Activated B cell treated with CpG ODN at 0.5 μM for 24 hours (primary cell): ENCODE measurements at regions of chr6 and their contacts with region 1.

Region 1: DNA sequence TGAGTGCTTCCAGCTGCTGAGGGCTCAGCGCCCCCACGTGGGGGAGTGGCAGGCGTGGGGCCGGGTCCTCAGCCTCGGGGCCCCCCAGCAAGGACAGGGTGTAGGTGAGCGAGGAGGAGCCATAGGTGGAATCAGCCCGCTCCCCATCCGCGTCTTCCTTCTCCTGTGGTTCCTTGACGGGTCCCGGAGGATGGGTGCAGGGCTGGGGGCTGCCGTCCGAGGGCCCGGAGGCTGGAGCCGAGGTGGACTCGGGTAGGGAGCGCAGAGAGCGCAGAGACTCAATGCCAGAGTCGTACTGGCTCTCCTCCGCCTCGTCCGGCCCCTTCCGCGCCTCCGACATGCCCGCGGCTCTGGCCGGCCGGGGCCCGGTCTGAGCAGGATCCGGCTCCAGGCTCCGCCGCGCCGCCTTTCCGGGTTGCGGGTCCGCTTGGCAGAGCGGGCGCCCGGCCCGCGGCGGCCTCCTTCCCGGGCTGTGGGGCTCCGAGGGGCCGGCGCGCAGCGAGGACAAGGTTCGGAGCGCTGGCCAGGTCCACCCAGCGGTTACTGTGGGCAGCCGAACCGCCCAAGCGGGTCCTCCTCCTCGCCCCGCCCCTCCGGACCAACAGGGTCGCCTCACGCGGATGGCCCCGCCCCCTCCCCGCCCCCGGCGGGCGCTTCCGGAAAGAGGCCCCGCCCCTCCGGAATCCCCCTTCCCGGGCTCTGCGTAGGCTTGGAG is at the start of gene NFKBIE:
- DNase-seq: peak; percentile 99
- ATAC-seq: peak; percentile 50
- H3K4me3 Mint-ChIP-seq: peak within 1 kb of the TSS; percentile 100
- H3K27ac Mint-ChIP-seq: peak within 1 kb of the TSS; percentile 99
- H3K4me1 Mint-ChIP-seq: peaks cover 77% of the 10 kb centered on the region
- H3K27me3 Mint-ChIP-seq: peaks cover 4% of the 10 kb centered on the region
- CTCF ChIP-seq: no peak
- total RNA-seq, gene NFKBIE: 94.7 and 99.2 TPM in 2 replicates

Region 2: GRCh38 chr6:42563697-42564505 is 1701.3 kb before region 1 on chr6 and contains the start of gene UBR2:
- CTCF ChIA-PET with region 1: no interaction called
- POLR2A ChIA-PET with region 1: no interaction called
- intact Hi-C with region 1: loop called (anchors 10 kb)
- DNase-seq: peak; percentile 73
- ATAC-seq: peak; percentile 96
- H3K4me3 Mint-ChIP-seq: peak within 1 kb of the TSS; percentile 92
- H3K27ac Mint-ChIP-seq: peak within 1 kb of the TSS; percentile 92
- H3K4me1 Mint-ChIP-seq: peaks cover 43% of the 10 kb centered on the region
- H3K27me3 Mint-ChIP-seq: no peaks in the 10 kb centered on the region
- CTCF ChIP-seq: no peak
- total RNA-seq, gene UBR2: 34.3 and 40.8 TPM in 2 replicates

Region 3: DNA sequence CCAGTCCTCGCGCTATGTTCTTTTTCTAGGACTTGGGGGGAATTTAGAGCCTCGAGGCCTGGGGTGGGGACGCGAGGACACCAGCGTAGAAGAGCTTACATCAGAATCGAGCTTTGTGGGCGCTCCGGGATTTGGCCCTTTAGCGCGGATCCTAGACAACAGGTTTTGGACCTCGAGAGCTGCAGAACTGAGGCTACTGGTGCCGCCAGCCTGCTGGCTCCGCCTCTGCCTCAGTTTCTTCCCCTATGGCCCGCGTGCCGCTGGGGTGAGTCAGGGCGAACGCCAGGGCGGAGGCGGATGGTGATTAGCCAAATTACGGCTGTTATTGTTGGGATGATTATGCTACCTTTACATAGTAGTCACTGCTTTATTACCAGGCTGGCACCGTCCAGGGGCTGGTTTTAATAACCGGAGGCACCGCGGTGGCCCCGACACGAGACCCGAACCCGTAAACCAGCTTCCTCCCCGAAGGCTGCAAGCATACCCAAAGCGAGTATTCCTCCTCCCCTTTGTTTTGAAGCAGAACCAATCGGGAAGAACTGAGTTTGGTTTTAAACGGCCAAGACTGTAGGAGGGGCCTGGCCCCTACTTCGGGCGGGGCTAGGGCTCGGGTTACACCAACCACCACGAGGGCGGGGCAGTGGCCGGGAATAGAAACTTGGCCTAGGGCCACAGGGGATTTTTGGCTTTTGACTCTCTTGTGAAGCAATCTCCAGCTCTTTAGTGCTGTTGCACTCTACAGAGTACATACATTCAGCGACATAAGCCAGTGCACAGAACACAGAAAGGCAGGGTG is 635.5 kb before region 1 on chr6:
- CTCF ChIA-PET with region 1: no interaction called
- POLR2A ChIA-PET with region 1: interaction called, 5 read pairs
- intact Hi-C with region 1: loop called (anchors 5 kb)
- DNase-seq: peak; percentile 87
- ATAC-seq: peak; percentile 70
- H3K4me3 Mint-ChIP-seq: peak overlapping the region; percentile 98
- H3K27ac Mint-ChIP-seq: peak overlapping the region; percentile 99
- H3K4me1 Mint-ChIP-seq: peaks cover 41% of the 10 kb centered on the region
- H3K27me3 Mint-ChIP-seq: no peaks in the 10 kb centered on the region
- CTCF ChIP-seq: no peak

Region 4: DNA sequence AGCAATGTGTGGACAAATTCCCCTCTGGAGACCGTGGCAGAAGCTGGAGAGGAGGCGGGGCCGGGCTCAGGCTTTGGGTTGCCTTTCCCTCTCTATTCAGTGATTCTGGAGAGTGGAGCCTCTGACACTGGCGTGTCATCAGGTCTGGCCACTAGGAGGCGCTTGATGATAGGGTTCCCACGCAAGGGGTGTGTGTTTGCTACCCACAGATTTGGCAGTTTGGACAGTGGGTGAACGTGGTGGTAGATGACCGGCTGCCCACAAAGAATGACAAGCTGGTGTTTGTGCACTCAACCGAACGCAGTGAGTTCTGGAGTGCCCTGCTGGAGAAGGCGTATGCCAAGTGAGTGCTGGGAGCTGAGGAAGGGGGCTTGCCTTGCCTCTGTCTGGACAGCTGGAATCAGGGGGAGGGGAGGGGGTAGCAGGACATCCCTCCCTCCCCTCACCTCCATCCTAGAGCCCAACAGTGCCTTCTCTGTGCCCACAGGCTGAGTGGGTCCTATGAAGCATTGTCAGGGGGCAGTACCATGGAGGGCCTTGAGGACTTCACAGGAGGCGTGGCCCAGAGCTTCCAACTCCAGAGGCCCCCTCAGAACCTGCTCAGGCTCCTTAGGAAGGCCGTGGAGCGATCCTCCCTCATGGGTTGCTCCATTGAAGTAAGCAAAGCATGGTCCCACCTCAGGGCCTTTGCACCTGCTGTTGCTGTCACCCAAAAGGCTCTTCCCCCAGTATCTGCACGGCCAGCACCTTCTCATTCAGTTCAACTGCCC is 92.2 kb before region 1 on chr6:
- CTCF ChIA-PET with region 1: interaction called, 7 read pairs
- POLR2A ChIA-PET with region 1: no interaction called
- intact Hi-C with region 1: loop called (anchors 1 kb)
- DNase-seq: peak; percentile 63
- ATAC-seq: peak; percentile 75
- H3K4me3 Mint-ChIP-seq: no peak overlapping the region
- H3K27ac Mint-ChIP-seq: no peak overlapping the region
- H3K4me1 Mint-ChIP-seq: peaks cover 14% of the 10 kb centered on the region
- H3K27me3 Mint-ChIP-seq: peaks cover 7% of the 10 kb centered on the region
- CTCF ChIP-seq: no peak

Region 5: DNA sequence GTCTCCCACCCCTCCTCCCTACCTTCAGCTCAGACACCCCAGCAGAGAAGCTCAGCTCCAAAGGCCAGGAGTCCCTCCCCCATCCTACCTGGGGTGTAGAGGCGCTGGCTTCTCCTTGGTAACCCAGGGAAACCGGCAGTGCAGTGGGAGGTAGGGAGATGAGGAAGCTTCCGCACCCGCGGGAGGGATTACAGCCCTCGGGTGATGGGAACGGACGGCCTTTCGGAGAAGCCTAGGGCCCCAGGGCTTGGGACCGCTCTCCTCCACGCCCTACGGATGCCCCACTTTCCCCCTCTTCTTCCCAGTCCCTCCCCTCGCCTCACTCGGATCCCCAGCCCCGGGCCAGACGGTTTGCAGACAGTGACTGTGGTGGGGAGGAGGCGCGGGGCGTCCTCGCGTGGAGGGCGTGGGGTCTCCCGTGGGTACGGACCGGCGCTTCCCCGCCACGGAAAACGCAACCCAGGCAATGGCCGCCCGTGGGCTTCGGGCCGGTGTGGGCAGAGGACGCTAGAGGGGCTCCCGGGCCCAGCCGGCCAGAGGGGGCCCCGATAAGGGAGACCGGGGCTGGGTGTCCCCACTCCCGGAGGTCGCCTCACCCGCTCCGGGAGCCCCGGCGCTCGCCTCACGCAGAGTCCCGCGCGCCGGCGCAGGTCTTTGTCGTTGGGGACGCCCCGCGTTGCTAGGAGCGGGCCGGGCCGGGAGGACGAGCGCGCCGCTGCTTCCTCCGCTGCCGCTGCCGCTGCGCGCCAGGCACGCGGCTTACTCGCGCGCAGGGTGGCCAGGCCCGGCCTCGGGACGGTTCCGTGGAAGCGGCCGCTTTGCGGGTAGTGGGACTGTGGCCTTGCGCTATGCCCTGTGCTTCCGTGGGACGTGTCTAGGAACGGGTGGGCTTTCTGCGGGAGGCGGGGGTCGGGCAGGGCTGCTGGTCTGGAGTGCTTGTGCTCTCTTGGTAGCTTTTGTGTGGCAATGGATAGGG is 32.2 kb after region 1 on chr6:
- CTCF ChIA-PET with region 1: interaction called, 81 read pairs
- POLR2A ChIA-PET with region 1: interaction called, 3 read pairs
- intact Hi-C with region 1: loop called (anchors 2 kb)
- DNase-seq: no peak
- ATAC-seq: peak; percentile 80
- H3K4me3 Mint-ChIP-seq: peak overlapping the region; percentile 25
- H3K27ac Mint-ChIP-seq: no peak overlapping the region
- H3K4me1 Mint-ChIP-seq: peaks cover 13% of the 10 kb centered on the region
- H3K27me3 Mint-ChIP-seq: peaks cover 35% of the 10 kb centered on the region
- CTCF ChIP-seq: no peak

Region 6: GRCh38 chr6:44338228-44339122 is 73.3 kb after region 1 on chr6:
- CTCF ChIA-PET with region 1: interaction called, 38 read pairs
- POLR2A ChIA-PET with region 1: no interaction called
- intact Hi-C with region 1: loop called (anchors 1 kb)
- DNase-seq: peak; percentile 36
- ATAC-seq: peak; percentile 94
- H3K4me3 Mint-ChIP-seq: no peak overlapping the region
- H3K27ac Mint-ChIP-seq: no peak overlapping the region
- H3K4me1 Mint-ChIP-seq: no peaks in the 10 kb centered on the region
- H3K27me3 Mint-ChIP-seq: peaks cover 22% of the 10 kb centered on the region
- CTCF ChIP-seq: peak; percentile 58

Region 7: DNA sequence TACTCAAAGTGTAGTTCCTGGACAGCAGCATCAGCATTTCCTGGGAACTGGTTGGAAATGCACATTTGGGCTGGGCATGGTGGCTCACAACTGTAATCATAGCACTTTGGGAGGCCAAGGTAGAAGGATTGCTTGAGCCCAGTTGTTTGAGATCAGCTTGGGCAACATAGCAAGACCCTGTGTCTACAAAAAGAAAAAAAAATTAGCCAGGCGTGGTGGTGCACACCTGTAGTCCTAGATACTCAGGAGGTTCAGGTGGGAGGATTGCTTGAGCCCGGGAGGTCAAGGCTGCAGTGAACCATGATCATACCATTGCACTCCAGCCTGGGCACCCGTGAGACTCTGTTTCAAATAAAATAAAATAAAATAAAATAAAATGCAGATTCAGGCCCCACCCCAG is 278.5 kb after region 1 on chr6:
- CTCF ChIA-PET with region 1: no interaction called
- POLR2A ChIA-PET with region 1: no interaction called
- intact Hi-C with region 1: no loop called
- DNase-seq: no peak
- ATAC-seq: no peak
- H3K4me3 Mint-ChIP-seq: no peak overlapping the region
- H3K27ac Mint-ChIP-seq: no peak overlapping the region
- H3K4me1 Mint-ChIP-seq: no peaks in the 10 kb centered on the region
- H3K27me3 Mint-ChIP-seq: peaks cover 19% of the 10 kb centered on the region
- CTCF ChIP-seq: no peak

Region 8: DNA sequence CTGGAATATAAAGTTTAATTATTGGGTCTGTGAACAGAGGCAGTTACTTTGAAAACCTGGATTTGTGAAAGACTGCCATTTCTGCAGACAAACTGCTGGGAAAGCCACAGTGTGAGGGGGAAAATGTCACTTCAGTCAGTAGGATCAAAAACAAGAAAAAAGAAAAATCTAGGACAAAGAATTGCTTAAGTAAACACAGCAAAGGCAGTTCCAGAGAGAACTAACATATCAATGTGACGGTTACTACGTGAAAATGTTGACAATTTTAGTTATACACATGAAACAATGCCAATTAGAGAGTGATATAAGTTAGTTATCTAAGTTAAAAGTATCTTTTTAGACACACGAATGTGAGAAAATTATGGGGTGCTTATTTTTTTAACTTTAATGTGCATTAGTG is 792.5 kb after region 1 on chr6:
- CTCF ChIA-PET with region 1: no interaction called
- POLR2A ChIA-PET with region 1: no interaction called
- intact Hi-C with region 1: no loop called
- DNase-seq: no peak
- ATAC-seq: no peak
- H3K4me3 Mint-ChIP-seq: no peak overlapping the region
- H3K27ac Mint-ChIP-seq: no peak overlapping the region
- H3K4me1 Mint-ChIP-seq: no peaks in the 10 kb centered on the region
- H3K27me3 Mint-ChIP-seq: no peaks in the 10 kb centered on the region
- CTCF ChIP-seq: no peak